ENCODE measurements at regions of chr4 and their contacts with region 1.

Region 1: GRCh38 chr4:98485816-98486345 is 172.5 kb downstream of the TSPAN5 start:
- DNase-seq: no peak
- ATAC-seq: no peak
- H3K4me3 ChIP-seq: no peak overlapping the region
- H3K27ac ChIP-seq: no peak overlapping the region
- H3K4me1 ChIP-seq: peaks cover 10% of the 10 kb centered on the region
- H3K27me3 ChIP-seq: no peaks in the 10 kb centered on the region
- CTCF ChIP-seq: no peak

Region 2: DNA sequence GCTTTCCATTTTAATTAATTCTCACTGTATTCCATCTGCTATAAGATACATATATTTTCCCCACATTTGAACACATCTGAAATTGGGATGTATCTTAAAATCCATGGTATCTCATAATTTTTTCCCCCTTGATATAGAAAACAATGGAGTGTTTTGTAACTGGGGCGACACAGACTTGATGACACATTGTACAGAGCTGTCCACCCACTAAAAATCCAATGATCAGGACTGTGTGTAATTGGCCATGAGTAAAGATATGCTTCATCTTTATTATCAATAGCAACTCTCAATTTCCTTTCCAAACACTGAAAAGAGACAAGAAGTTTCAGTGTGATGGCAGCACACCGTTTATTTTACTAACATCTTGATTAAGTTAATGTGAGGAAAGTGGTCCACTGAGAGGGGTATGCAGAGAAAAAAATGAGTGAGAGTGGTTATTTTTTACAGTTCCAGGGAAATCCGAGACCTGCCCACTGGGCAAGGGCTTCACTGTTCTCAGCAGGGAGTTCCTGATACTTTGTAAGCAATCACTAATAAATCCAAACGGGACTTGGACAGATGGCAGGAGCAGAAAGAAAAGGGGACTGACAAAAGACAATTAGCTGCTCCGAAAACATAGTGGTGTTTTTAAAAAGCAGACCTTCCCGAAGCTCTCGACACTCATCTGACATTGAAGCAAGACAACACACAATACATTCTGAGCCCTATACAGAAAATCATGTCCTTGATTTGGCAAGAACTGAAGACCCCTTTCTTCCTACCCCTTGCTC is 23.1 kb after region 1 on chr4:
- CTCF ChIA-PET with region 1: no interaction called
- POLR2A ChIA-PET with region 1: no interaction called
- in situ Hi-C with region 1: no loop called
- intact Hi-C with region 1: loop called (anchors 2 kb)
- DNase-seq: no peak
- ATAC-seq: no peak
- H3K4me3 ChIP-seq: no peak overlapping the region
- H3K27ac ChIP-seq: no peak overlapping the region
- H3K4me1 ChIP-seq: peaks cover under 1% of the 10 kb centered on the region; the same call in 1 of the 2 replicates
- H3K27me3 ChIP-seq: no peaks in the 10 kb centered on the region
- CTCF ChIP-seq: no peak

Measured in Panc1 (cell line).